Right cardiac atrium (tissue), 5 donors: ENCODE measurements at regions of chr12 and their contacts with region 1.

Region 1: DNA sequence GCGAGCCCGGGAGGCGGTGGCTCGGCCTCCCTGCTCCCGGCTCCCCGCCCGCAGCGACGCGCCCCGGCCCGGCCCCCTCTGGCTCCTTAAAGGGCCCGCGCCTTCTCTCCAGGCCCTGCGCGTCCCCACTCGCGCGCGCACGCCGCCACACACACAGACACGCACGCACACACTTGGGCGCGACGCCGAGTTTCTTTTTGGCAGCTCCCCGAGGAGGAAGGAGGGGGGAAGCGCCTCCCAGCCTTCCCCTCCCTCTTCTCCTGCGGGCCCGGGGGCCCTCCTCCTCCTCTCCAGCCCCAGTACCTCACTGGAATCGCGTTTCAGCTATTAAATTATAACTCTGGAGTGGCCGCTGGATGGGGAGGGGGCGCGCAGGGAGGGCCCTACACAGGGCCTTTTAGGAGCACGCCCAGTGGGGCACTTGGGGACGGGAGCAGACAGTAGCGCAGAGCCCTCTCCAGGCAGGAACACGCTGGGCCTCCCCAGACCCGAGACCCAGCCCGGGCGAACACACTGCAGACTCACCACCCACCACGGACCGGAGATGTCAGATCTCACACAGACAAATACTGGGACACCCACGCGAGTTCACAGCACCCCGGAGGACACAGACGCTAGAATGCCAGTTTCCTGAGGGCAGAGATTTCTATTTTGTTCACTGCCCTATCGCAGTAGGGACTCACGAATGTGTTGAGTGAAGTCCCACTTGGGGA is 405 bp upstream of the NCOR2 start:
- DNase-seq: peak; percentile 97 to 99 (median 99)
- ATAC-seq: peak; percentile 89 to 90
- H3K4me3 ChIP-seq: peak overlapping the region; percentile 84
- H3K27ac ChIP-seq: peak overlapping the region; percentile 71
- H3K4me1 ChIP-seq: peaks cover 11% of the 10 kb centered on the region
- H3K27me3 ChIP-seq: no peaks in the 10 kb centered on the region

Region 2: GRCh38 chr12:124388679-124389536 is 178.9 kb before region 1 on chr12:
- intact Hi-C with region 1: loop called in 1 of 4 experiments (anchors 10 kb)
- DNase-seq: peak; percentile 93 to 96 (median 96)
- ATAC-seq: peak; percentile 70 to 75
- H3K4me3 ChIP-seq: peak overlapping the region; percentile 53
- H3K27ac ChIP-seq: peak overlapping the region; percentile 88
- H3K4me1 ChIP-seq: peaks cover 21% of the 10 kb centered on the region
- H3K27me3 ChIP-seq: no peaks in the 10 kb centered on the region

Region 3: GRCh38 chr12:124497658-124498057 is 70.2 kb before region 1 on chr12:
- intact Hi-C with region 1: loop called in 1 of 4 experiments (anchors 5 kb)
- DNase-seq: peak; percentile 89 to 91 (median 91)
- ATAC-seq: peak; percentile 79 to 80
- H3K4me3 ChIP-seq: no peak overlapping the region
- H3K27ac ChIP-seq: peak overlapping the region; percentile 44
- H3K4me1 ChIP-seq: peaks cover 32% of the 10 kb centered on the region
- H3K27me3 ChIP-seq: no peaks in the 10 kb centered on the region

Region 4: DNA sequence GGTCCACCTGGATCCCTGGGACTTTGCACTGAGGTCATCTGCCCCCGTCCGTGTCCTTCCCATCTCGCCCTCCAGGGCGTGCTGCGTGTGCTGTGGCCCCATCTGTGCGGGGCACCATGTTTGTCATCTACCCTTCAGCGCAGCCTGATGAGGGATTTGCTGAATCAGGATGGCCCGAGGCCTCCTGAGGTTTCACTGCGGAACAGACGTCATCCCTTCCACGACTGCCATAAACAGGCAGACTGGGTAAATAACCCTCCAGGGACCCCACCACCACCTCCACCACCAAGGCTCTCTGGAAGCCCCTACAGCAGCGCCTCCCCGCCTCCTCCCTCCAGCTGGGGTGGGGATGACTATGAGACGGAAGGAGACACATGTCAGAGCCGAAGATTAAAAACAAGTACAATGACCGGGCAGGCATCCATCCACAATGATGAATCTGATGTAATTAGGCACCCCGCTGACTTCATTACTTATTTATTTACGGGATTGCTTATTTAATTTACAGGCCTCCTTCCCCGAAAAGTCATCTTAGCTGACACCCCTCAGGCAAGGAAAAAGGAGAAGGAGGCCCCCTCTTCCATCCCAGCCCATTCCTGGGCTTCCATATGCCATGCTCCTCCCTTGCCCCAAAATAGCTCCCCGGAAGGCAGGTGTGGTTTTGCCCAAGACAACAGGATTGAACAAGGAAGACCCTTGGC is 39.8 kb before region 1 on chr12:
- intact Hi-C with region 1: loop called in 2 of 4 experiments (anchors 5 kb)
- DNase-seq: peak in 1 of 3 donors; percentile 54
- ATAC-seq: peak; percentile 3 to 23
- H3K4me3 ChIP-seq: no peak overlapping the region
- H3K27ac ChIP-seq: peak overlapping the region; percentile 56
- H3K4me1 ChIP-seq: peaks cover 18% of the 10 kb centered on the region
- H3K27me3 ChIP-seq: no peaks in the 10 kb centered on the region

Region 5: DNA sequence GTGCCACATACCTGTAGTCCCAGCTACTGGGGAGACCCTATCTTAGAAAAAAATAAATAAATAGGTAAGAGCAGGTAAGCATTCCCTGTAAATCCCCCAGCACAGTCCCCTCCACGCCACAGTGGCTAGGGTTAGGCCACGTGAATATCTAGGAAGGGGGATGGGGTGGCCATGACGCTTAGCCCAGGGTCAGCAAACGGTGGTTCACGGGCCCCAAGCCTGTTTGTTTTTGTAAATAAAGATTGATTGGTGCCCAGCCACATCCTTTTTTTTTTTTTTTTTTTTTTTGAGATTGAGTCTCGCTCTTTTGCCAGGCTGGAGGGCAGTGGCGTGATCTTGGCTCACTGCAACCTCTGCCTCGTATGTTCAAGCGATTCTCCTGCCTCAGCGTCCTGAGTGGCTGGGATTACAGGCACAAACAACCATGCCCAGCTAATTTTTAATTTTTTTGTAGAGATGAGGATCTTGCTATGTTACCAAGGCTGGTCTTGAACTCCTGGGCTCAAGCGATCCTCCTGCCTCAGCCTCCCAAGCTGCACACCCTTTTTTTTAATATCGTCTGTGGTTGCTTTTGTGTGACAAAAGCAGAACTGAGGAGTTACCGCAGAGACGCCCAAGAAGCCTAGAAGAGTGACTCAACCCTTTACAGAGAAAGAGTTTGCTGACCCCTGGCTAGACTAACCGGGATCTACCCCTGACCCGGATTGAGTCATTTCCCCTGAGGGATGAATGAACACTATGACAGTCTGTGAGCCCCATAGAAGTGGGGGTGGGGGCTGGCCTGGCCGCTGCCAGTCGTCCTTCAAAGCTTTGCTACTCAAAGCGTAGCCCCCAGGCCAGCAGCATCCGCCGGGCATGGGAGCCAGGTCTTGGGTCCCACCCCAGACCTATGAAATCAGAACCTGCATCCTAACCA is 113.3 kb after region 1 on chr12:
- intact Hi-C with region 1: loop called in 1 of 4 experiments (anchors 10 kb)
- DNase-seq: peak; percentile 82 to 86 (median 84)
- ATAC-seq: peak; percentile 82 to 87
- H3K4me3 ChIP-seq: no peak overlapping the region
- H3K27ac ChIP-seq: peak overlapping the region; percentile 49
- H3K4me1 ChIP-seq: peaks cover 19% of the 10 kb centered on the region
- H3K27me3 ChIP-seq: no peaks in the 10 kb centered on the region

Region 6: DNA sequence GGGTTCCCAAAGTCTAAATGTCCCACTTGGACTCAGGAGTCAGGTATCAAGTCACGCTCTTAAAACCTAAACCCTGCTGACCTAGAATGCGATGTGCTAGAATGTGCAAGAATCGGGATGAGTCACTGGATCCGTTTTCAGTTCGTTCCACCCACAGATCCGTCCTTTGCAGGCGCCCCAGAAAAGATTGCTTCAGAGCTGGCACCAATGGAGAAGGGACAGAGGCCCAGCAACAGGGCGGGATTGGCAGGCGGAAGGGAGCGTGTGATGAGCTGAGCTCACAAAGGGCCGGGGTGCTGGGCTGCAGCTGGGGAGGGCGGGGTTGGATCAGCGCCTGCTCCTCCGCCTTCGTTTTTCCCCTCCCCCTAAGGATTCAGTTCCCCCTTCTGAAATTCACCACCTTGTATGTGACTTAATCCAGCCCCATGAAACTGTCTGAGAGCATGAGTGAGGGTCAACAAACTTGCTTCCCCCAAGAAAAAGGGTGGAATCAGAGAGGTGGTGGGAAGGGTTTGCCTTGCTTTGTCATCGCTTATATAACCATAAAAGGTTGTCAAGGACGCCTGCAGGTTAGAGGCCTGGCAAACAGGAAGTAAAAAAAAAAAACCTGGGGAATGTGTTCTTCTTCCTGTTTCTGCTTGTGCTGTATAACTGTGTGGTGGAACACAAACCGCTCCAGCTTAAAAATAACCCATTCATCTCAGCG is 349.5 kb after region 1 on chr12:
- intact Hi-C with region 1: no loop called
- DNase-seq: peak; percentile 98 to 99 (median 98)
- ATAC-seq: peak; percentile 94 to 96
- H3K4me3 ChIP-seq: peak overlapping the region; percentile 30
- H3K27ac ChIP-seq: peak overlapping the region; percentile 100
- H3K4me1 ChIP-seq: peaks cover 9% of the 10 kb centered on the region
- H3K27me3 ChIP-seq: no peaks in the 10 kb centered on the region